RWPE1 (cell line): ENCODE measurements at regions of chr11 and their contacts with region 1.

Region 1: DNA sequence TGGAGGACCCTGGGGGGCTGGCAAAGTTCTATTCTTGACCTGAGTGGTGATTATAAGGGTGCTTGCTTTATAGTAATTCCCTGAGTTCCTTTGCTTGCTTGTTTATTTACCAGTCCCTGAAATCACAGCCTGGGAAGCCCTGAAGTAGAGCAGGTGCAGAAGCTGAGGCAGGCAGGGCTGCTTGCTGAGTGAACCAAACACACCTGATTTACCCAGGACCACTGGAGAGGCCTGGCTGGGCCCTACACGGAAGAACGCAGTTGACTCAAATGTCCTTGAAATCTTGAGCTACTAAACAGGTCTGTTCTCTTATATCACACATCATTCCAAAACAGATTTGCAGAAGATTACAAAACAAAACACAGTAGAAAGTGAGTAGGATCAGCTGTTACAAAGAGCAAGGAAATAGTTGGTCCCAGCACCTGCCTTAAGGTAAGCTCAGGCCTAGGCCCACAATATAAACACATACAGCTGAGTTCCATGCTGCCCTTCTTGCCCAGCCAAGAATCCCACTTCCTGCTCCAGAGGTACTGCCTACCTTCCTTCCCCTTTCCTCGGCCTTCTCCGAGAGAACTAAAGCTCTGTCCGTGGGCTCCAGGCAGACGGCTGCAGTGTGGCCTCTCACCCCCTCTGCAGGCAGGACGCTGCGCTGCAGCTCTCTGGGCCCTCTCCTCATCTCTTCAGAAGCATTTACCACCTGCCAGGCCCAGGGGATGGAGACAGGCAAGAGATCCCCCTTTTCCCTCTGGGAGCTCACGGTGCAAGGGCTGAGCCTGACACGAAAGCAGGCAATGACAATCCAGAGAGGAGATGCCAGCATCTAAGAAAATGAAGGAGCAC is 46.1 kb upstream of the SCUBE2 start:
- DNase-seq: peak; percentile 67
- H3K27ac ChIP-seq: peak overlapping the region; percentile 83
- CTCF ChIP-seq: peak; percentile 82

Region 2: DNA sequence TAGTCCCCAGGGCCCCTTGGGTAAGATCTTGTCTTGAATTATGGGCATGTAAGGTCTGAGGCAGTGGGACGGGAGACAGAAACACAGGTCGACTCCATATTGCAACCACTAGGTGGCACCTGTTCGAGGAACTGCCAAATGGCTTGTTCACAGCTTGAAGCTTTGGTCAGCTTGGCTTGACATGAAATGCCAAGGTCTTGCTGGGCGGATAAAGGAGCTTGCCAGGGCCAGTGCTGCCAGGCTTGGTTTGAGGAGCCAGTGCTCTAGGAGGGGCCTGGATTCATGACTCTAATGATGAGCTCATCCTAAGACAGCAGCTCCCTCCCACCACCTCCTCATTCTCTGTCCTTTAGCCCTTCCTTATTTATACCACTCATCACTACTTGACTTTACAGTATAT is 121.8 kb before region 1 on chr11:
- CTCF ChIA-PET with region 1: interaction called, 44 read pairs
- POLR2A ChIA-PET with region 1: no interaction called
- DNase-seq: peak; percentile 70
- H3K27ac ChIP-seq: no peak overlapping the region
- CTCF ChIP-seq: peak; percentile 82

Region 3: GRCh38 chr11:9150501-9150900 is 13.0 kb after region 1 on chr11:
- CTCF ChIA-PET with region 1: interaction called, 11 read pairs
- POLR2A ChIA-PET with region 1: no interaction called
- DNase-seq: no peak
- H3K27ac ChIP-seq: no peak overlapping the region
- CTCF ChIP-seq: no peak